Activated CD8-positive, alpha-beta T cell treated with anti-CD3 and anti-CD28 coated beads for 36 hours (primary cell): ENCODE measurements at regions of chr10 and their contacts with region 1.

Region 1: DNA sequence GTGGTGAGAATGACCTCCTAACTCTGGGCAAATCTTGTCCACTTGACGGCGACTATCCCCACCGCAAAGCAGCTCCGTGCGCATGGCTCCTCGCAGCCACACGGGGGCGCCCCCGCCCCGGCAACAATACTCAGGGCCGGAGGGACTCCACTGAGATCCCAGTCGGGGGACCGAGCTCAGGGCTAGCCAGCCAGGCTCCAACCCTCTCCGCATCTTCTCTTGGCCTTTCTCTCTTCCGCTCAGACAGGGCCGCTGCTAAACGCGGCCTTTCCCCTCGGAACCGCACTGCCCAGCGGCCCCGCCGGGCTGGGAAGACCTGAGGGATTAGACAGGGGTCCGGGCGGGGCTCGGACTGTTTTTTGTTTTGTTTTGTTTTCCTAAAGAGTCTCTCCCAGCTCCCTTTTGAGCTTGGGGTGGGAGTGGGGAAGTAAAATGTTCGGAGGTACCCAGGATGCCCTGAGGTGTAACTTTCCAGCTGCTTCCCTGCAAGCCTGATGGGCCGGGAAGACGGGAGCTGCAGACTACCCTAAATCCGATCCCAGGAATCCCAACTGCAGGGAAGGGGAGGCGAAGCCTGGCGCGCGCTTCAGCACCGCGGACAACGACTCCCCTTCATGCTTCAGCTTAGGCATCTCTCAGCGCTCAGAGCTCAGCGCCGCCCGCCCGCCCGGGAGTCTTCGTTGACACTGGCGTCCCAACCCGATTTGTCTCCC is 2.7 kb downstream of the KCNIP2 start:
- DNase-seq: peak; percentile 85
- ATAC-seq: peak; percentile 65
- H3K4me3 Mint-ChIP-seq: peak overlapping the region; percentile 77
- H3K27ac Mint-ChIP-seq: no peak overlapping the region
- H3K4me1 Mint-ChIP-seq: peaks cover 45% of the 10 kb centered on the region
- H3K27me3 Mint-ChIP-seq: peaks cover 14% of the 10 kb centered on the region
- CTCF ChIP-seq: peak; percentile 97

Region 2: GRCh38 chr10:101782811-101783735 is 57.8 kb before region 1 on chr10 and contains the start of gene NPM3:
- CTCF ChIA-PET with region 1: interaction called, 10 read pairs
- POLR2A ChIA-PET with region 1: no interaction called
- intact Hi-C with region 1: no loop called
- DNase-seq: peak; percentile 96
- ATAC-seq: peak; percentile 85
- H3K4me3 Mint-ChIP-seq: peak within 1 kb of the TSS; percentile 94
- H3K27ac Mint-ChIP-seq: peak within 1 kb of the TSS; percentile 95
- H3K4me1 Mint-ChIP-seq: peaks cover 42% of the 10 kb centered on the region
- H3K27me3 Mint-ChIP-seq: peaks cover 5% of the 10 kb centered on the region
- CTCF ChIP-seq: no peak
- total RNA-seq, gene NPM3: 235 to 264 TPM

Region 3: GRCh38 chr10:101830322-101831168 is 10.4 kb before region 1 on chr10:
- CTCF ChIA-PET with region 1: interaction called, 15 read pairs
- POLR2A ChIA-PET with region 1: interaction called, 8 read pairs
- intact Hi-C with region 1: no loop called
- DNase-seq: peak; percentile 94
- ATAC-seq: peak; percentile 72
- H3K4me3 Mint-ChIP-seq: peak overlapping the region; percentile 70
- H3K27ac Mint-ChIP-seq: peak overlapping the region; percentile 94
- H3K4me1 Mint-ChIP-seq: peaks cover 43% of the 10 kb centered on the region
- H3K27me3 Mint-ChIP-seq: no peaks in the 10 kb centered on the region
- CTCF ChIP-seq: no peak

Region 4: DNA sequence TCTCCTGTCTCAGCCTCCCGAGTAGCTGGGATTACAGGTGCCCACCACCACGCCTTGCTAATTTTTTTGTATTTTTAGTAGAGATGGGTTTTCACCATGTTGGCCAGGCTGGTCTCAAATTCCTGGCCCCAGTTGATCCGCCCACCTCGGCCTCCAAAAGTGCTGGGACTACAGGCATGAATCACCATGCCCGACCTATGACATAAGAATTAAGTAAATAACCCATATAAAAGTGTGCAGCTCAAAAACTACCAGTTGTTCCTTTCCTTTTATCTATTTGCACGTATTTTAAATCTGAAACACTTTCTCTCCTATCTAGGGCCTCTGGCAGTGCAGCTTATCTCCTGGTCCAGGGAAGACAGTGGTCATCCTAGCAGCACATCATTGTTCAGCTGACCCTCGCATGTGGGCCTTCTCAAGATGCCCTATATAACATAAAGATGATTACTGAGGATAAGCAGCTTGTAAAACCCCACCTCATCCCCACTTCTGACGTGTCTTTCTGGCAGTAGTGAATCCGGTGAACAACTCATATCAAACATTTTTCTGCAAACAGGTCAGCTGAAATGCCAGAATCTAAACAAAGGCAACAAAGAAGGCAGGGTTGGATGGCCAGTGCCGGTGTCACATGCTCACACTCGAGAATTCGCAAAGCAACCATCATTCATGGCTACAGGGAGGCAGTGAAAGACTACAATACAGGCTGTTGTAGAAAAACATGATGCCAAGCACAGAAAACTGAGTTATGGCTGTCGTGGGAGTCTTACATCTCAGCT is 38.7 kb after region 1 on chr10:
- CTCF ChIA-PET with region 1: interaction called, 14 read pairs
- POLR2A ChIA-PET with region 1: no interaction called
- intact Hi-C with region 1: no loop called
- DNase-seq: no peak
- ATAC-seq: no peak
- H3K4me3 Mint-ChIP-seq: no peak overlapping the region
- H3K27ac Mint-ChIP-seq: no peak overlapping the region
- H3K4me1 Mint-ChIP-seq: peaks cover 12% of the 10 kb centered on the region
- H3K27me3 Mint-ChIP-seq: no peaks in the 10 kb centered on the region
- CTCF ChIP-seq: no peak

Region 5: DNA sequence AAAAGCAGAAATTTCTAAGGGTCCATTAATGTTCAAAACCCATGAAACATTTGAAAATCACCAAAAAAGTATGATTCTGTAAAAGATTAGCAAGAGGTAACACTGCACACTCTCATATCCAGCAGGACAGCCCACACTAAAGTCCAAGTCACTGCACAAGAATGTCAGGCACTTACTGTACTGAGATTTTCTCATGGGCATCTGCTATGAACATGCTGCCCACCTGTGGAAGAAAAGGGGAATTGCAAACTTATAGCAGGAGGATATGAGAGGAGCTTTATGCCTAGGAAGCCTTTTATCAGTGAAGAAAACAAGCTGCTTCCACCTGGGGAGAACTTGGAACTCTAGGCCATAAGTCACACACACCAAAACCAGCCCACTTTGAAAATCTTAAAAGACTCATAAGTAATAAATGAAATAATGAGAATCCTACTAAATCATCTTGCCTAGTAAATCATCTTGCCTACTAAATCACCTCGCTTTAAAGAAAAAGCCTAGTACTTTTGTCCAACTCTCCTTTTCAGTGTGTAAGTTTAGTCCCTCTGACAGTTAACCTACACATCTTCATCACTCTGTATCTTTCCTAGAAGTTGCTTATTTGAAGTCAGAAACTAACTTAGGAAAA is 169.0 kb after region 1 on chr10:
- CTCF ChIA-PET with region 1: interaction called, 200 read pairs
- POLR2A ChIA-PET with region 1: interaction called, 6 read pairs
- intact Hi-C with region 1: loop called (anchors 2 kb)
- DNase-seq: peak; percentile 44
- ATAC-seq: peak; percentile 91
- H3K4me3 Mint-ChIP-seq: no peak overlapping the region
- H3K27ac Mint-ChIP-seq: no peak overlapping the region
- H3K4me1 Mint-ChIP-seq: no peaks in the 10 kb centered on the region
- H3K27me3 Mint-ChIP-seq: no peaks in the 10 kb centered on the region
- CTCF ChIP-seq: peak; percentile 90

Region 6: GRCh38 chr10:102064868-102065560 is 224.1 kb after region 1 on chr10 and contains the start of gene HPS6:
- CTCF ChIA-PET with region 1: interaction called, 151 read pairs
- POLR2A ChIA-PET with region 1: no interaction called
- intact Hi-C with region 1: loop called (anchors 5 kb)
- DNase-seq: peak; percentile 91
- ATAC-seq: peak; percentile 99
- H3K4me3 Mint-ChIP-seq: peak within 1 kb of the TSS; percentile 84
- H3K27ac Mint-ChIP-seq: peak within 1 kb of the TSS; percentile 90
- H3K4me1 Mint-ChIP-seq: peaks cover 33% of the 10 kb centered on the region
- H3K27me3 Mint-ChIP-seq: no peaks in the 10 kb centered on the region
- CTCF ChIP-seq: no peak
- total RNA-seq, gene HPS6: 18.0 to 18.1 TPM